HCT116 (cell line): ENCODE measurements at regions of chr11 and their contacts with region 1.

Region 1: DNA sequence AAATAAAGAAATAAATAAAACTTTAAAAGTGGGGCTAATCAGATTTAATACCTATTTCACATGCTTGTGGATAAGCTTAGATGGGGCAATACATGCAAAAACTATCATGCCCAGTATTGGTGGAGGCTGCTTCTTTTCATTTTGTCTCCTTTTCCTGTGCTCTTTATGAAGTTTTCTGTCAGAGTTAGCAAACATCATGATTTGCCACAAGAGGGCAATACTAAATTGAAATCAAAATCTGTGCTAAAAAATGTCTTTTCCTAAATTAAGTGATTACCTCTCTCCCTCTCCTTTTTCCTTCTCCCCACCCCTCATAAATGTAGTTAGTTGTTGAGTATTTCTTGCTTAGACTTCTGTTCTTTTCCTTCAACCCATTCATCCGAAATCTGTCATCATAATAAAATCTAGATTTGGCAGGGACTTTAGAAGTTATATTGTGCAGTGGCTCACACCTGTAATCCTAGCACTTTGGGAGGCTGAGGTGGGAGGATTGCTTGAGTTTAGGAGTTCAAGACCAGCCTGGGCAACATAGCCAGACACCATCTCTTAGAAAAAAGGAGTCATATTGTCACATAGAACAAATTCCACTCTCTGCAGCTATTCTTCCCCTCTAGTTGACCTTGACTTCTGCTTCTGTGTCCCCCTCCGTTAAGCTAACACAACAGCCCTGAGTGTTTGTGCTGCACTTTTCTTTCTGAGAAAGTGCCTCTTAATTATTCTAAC is 4.7 kb upstream of the ARHGAP42 start:
- DNase-seq: peak; percentile 21
- ATAC-seq: no peak; the same call in 1 of the 2 replicates
- H3K4me3 ChIP-seq: no peak overlapping the region
- H3K27ac ChIP-seq: no peak overlapping the region
- H3K4me1 ChIP-seq: peaks cover 12 to 54% of the 10 kb centered on the region in 2 experiments; a peak in 3 of 4 replicates
- H3K27me3 ChIP-seq: no peaks in the 10 kb centered on the region
- CTCF ChIP-seq: peak; percentile 45 to 78 (median 60); a peak in 4 of 6 replicates
- POLR2A ChIP-seq: no peak
- RAD21 ChIP-seq: peak; percentile 76

Region 2: GRCh38 chr11:100629671-100630070 is 52.7 kb before region 1 on chr11:
- CTCF ChIA-PET with region 1: no interaction called
- POLR2A ChIA-PET with region 1: no interaction called
- RAD21 ChIA-PET with region 1: no interaction called
- intact Hi-C with region 1: no loop called
- DNase-seq: no peak
- ATAC-seq: peak; percentile 59; the same call in 1 of the 2 replicates
- H3K4me3 ChIP-seq: no peak overlapping the region
- H3K27ac ChIP-seq: no peak overlapping the region
- H3K4me1 ChIP-seq: no peaks in the 10 kb centered on the region
- H3K27me3 ChIP-seq: no peaks in the 10 kb centered on the region
- CTCF ChIP-seq: peak in 2 of 3 experiments; percentile 9 to 25; a peak in 2 of 6 replicates
- POLR2A ChIP-seq: no peak
- RAD21 ChIP-seq: peak; percentile 38

Region 3: GRCh38 chr11:100753172-100753543 is 70.8 kb after region 1 on chr11:
- CTCF ChIA-PET with region 1: no interaction called
- POLR2A ChIA-PET with region 1: no interaction called
- RAD21 ChIA-PET with region 1: no interaction called
- intact Hi-C with region 1: loop called (anchors 2 kb)
- DNase-seq: no peak
- ATAC-seq: peak; percentile 57
- H3K4me3 ChIP-seq: no peak overlapping the region
- H3K27ac ChIP-seq: peak overlapping the region; percentile 85
- H3K4me1 ChIP-seq: peaks cover 51 to 73% of the 10 kb centered on the region in 2 experiments
- H3K27me3 ChIP-seq: no peaks in the 10 kb centered on the region
- CTCF ChIP-seq: no peak
- POLR2A ChIP-seq: no peak
- RAD21 ChIP-seq: no peak

Region 4: DNA sequence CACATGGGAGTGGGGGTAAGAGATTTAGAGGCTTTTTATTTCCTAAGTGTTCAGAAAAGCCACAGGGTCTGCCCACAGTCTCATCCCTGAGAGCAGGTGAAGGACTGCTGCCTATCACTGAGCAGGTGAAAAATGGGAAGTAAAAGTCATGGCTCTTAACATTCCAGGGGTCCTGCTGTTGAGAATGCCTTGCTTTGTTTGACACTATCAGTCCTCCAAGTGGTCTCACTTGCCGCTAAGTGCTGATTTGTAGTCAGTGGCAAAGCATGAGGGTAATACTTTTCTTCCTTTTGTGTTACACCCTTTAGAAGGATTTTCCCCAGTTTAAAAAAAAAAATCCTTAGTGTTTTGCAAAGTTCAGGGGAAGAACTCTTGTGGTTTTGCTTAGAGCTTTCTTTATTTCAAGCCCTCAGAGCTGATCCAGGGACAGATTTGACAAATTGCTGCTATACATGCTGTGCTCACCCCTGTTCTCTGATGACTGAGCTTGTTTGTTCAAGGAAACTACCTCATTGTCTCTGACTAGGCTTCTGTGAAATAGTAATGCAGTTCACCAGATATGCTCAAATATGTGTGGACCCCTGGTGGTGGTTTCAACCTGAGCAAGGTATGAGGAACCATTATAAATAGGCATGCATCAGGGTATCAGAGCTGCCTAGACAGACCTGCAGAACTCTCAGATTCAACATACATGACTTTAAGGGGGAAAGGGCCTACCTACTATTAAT is 145.7 kb after region 1 on chr11:
- CTCF ChIA-PET with region 1: interaction called, 3 read pairs
- POLR2A ChIA-PET with region 1: no interaction called
- RAD21 ChIA-PET with region 1: interaction called, 3 to 4 read pairs
- intact Hi-C with region 1: loop called (anchors 1 kb)
- DNase-seq: peak; percentile 48
- ATAC-seq: peak; percentile 88
- H3K4me3 ChIP-seq: no peak overlapping the region
- H3K27ac ChIP-seq: 0 out of 2 replicates have a peak overlapping the region, but pooled peaks have one; percentile 0
- H3K4me1 ChIP-seq: peaks cover 3 to 43% of the 10 kb centered on the region in 2 experiments; a peak in 2 of 4 replicates
- H3K27me3 ChIP-seq: no peaks in the 10 kb centered on the region
- CTCF ChIP-seq: peak; percentile 33 to 52 (median 51); a peak in 4 of 6 replicates
- POLR2A ChIP-seq: no peak
- RAD21 ChIP-seq: peak; percentile 63

Region 5: GRCh38 chr11:100855466-100856067 is 173.2 kb after region 1 on chr11:
- CTCF ChIA-PET with region 1: interaction called, 5 read pairs
- POLR2A ChIA-PET with region 1: no interaction called
- RAD21 ChIA-PET with region 1: no interaction called
- intact Hi-C with region 1: loop called (anchors 1 kb)
- DNase-seq: peak; percentile 52
- ATAC-seq: no peak
- H3K4me3 ChIP-seq: no peak overlapping the region
- H3K27ac ChIP-seq: no peak overlapping the region
- H3K4me1 ChIP-seq: peaks cover 0 to 26% of the 10 kb centered on the region in 2 experiments; a peak in 2 of 4 replicates
- H3K27me3 ChIP-seq: no peaks in the 10 kb centered on the region
- CTCF ChIP-seq: peak; percentile 49 to 71 (median 69); a peak in 5 of 6 replicates
- POLR2A ChIP-seq: no peak
- RAD21 ChIP-seq: peak; percentile 84

Region 6: DNA sequence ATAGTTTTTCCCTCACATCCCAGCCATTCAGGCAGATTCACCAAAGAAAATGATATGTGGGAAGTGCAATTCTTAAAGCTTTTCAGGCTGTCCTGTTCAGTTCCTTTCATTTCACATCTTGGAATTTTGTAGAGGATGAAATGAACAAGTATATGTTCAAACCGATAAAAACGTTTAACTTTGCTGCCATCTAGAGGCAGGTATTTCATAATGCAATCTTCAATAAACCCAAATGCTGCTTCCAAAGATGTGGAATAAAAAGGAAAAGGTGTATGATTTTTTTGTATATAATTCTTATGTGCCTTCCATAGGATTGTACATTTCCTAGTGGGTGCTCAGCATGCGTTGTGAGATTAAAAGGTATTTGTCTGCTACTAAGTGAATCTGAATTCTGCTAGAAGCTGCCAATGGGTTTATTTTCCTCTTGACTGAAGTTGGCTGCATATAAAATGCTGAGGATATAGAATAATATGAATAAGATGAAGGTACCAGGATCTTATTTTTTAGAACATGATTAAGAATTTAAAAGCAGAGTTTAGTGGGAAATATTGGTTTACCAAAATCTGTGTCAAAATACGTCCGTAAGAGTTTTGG is 247.9 kb after region 1 on chr11:
- CTCF ChIA-PET with region 1: no interaction called
- POLR2A ChIA-PET with region 1: no interaction called
- RAD21 ChIA-PET with region 1: no interaction called
- intact Hi-C with region 1: loop called (anchors 2 kb)
- DNase-seq: peak; percentile 47
- ATAC-seq: peak; percentile 72
- H3K4me3 ChIP-seq: no peak overlapping the region
- H3K27ac ChIP-seq: no peak overlapping the region
- H3K4me1 ChIP-seq: peaks cover 4 to 33% of the 10 kb centered on the region in 2 experiments; a peak in 3 of 4 replicates
- H3K27me3 ChIP-seq: no peaks in the 10 kb centered on the region
- CTCF ChIP-seq: peak; percentile 46 to 80 (median 47); a peak in 4 of 6 replicates
- POLR2A ChIP-seq: no peak
- RAD21 ChIP-seq: peak; percentile 69